ENCODE measurements at regions of chr9 and their contacts with region 1.

Region 1: DNA sequence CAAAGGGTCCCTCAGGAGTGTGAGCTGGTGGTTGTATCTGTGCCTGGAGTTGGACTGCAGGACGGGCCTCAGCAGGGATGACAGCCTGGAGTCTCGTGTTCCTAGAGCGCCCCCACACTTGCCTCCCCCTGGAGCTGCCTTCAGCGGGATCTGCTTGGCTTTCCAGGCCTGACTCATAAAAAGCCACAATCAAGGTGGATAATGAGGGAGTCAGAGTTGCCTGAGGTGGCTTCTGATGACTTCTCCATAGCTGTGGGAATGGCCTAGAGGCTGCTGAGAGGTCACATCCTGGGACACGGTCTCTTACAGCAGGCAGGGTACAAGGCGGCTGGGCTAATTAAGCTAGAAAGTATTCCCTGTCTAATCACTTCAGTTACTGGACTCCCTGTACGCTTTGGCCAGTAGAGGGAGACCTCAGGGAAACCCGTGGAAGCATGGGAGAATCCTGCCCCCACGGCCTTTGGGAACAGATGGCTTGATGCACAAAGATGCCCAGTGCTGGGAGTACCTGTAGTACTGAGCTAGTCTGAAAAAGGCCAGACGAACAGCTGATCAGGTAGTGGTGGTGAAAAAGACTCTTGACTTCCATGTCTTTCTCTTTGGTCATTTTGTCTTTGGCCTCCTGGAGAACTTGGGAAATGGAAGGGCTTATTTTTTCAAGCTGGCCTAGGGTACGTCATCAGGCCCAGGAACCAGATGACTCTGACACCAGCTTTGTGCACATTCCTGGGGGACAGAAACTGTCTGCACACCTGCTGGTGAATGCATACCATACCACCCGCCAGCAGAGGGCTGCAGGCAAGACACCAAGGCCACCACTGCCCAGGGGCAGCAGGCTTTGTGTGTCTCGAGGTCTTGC is 16.1 kb upstream of the FRRS1L start:
- ATAC-seq: peak in 3 of 8 experiments; percentile 82 to 87 (median 85)
- H3K4me3 ChIP-seq: no peak overlapping the region
- H3K27ac ChIP-seq: no peak overlapping the region
- H3K4me1 ChIP-seq: no peaks in the 10 kb centered on the region

Region 2: GRCh38 chr9:109320742-109321448 is 137.7 kb after region 1 on chr9 and contains the start of gene EPB41L4B:
- in situ Hi-C with region 1: loop called in 2 of 9 experiments (anchors 25 kb)
- ATAC-seq: peak; percentile 86 to 96 (median 89)
- H3K4me3 ChIP-seq: peak within 1 kb of the TSS; percentile 50 to 59 (median 54)
- H3K27ac ChIP-seq: peak within 1 kb of the TSS in 1 of 2 donors; percentile 6
- H3K4me1 ChIP-seq: peaks cover 13 to 25% of the 10 kb centered on the region in 2 donors
- total RNA-seq, gene EPB41L4B: 1.8 to 5.2 (median 4.2) TPM

Measured in motor neuron (in vitro differentiated cells).